ENCODE measurements at regions of chr19 and their contacts with region 1.

Region 1: GRCh38 chr19:40139533-40140287 is 49.0 kb upstream of the ZNF780A start:
- DNase-seq: peak; percentile 78
- H3K4me3 ChIP-seq: no peak overlapping the region
- H3K27ac ChIP-seq: no peak overlapping the region
- H3K4me1 ChIP-seq: no peaks in the 10 kb centered on the region
- H3K27me3 ChIP-seq: peaks cover 15% of the 10 kb centered on the region

Region 2: DNA sequence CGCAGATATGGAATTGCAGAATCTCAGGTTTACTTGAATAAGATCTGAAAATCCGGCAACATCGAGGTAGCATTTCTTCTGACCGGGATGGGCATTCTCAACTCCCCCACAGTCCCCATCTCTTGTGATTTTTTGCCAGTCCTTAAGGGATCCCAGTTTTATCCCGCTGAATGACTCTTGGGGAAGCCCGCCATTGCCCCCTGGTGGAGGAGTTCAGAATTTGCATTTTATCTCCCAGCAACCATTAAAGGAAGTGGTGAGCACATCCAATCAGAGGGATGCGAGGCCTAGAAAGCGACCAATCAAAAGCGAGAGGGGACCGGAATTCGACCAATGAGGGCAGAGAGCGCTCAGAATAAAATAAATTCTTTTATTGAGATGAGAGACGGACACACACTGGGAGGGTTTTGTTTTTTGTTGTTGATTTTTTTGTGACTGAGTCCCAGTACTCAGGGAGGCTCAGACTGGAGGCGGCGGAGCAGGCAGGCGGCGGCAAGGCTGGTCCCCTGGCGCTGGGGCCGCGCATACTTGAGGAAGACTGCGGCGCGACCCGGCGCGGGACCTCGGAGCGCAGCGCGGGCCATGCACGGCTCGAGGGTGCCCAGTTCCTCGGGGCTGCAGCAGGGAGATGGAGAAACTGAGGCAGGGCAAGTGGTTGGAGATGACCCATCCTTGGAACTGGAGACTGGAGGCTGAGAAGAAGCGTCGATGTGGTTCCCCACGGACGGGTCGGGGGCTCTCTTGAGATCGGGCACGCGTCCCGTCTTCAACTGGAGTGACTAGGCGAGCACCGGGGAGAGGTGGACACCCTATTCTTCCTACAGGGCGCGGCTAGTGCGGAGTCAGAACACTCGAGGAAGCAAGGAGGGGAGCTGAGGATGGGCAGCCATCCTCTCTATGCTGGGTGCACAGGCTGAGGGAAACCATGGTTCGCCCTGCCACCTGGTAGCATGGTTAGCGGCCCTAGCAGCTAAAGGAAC is 82.4 kb after region 1 on chr19:
- in situ Hi-C with region 1: loop called (anchors 5 kb)
- DNase-seq: peak; percentile 91
- H3K4me3 ChIP-seq: no peak overlapping the region
- H3K27ac ChIP-seq: no peak overlapping the region
- H3K4me1 ChIP-seq: 0 out of 2 replicates have a peak, but pooled peaks cover 8% of the 10 kb centered on the region
- H3K27me3 ChIP-seq: peaks cover 5% of the 10 kb centered on the region; the same call in 1 of the 2 replicates

Measured in GM23248 (cell line).